ENCODE measurements at regions of chr22 and their contacts with region 1.

Region 1: DNA sequence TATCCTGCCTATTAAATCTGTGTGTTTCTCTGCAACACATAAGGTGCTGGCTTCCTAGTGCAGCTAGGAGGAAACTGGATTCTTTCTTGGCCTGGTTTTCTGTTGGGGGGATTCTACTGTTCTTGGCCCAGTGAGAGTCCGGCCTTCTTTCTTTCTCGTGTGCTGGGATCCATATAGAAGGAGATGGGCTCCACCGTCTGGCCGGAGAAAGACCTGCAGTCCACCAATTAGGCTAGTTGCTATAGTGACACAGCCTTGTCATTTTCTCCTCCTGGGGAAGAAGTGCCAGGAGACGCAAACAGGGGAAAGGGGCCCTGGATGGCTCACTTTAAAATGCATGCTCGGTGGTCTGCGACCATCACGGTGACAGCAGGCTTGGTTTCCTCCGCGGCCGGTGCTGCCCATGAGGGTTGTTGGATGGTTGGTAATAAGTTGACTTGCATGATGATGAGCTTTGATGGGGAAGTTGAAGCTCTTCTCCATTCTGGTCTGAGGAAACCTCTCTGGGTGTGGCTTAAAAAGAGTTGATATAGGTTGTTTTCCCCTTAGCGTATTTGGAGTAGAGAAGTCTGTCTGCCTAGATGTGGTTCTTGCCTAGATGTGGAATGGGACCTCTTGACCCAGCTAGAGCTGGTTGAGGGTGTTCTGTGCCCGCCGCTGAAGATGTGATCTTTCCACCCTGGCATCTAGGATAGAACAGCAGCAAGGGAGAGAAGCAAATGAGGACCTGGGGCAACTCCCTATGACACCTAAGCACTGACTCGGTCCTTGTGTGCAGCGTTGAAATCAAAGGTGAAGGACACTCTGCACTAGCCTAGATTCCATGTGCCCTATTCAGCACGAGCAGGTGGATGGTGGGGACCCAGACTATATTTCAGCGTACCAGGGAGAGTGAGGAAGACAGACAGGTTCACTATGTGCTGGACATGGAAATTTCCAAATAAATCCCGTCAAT is 1335.0 kb downstream of the BRD1 start:
- DNase-seq: peak; percentile 1
- ATAC-seq: peak; percentile 79
- H3K4me3 ChIP-seq: no peak overlapping the region
- H3K27ac ChIP-seq: no peak overlapping the region
- H3K4me1 ChIP-seq: no peaks in the 10 kb centered on the region
- H3K27me3 ChIP-seq: peaks cover 0 to 5% of the 10 kb centered on the region in 2 experiments; a peak in 3 of 4 replicates
- CTCF ChIP-seq: peak; percentile 76 to 80 (median 79)
- EP300 ChIP-seq: no peak
- POLR2A ChIP-seq: no peak
- RAD21 ChIP-seq: peak; percentile 81

Region 2: GRCh38 chr22:47213571-47214230 is 1278.9 kb before region 1 on chr22:
- CTCF ChIA-PET with region 1: interaction called, 8 read pairs
- POLR2A ChIA-PET with region 1: no interaction called
- RAD21 ChIA-PET with region 1: interaction called, 4 read pairs
- SMC1A ChIA-PET with region 1: interaction called, 6 read pairs
- in situ Hi-C with region 1: loop called (anchors 5 kb)
- intact Hi-C with region 1: loop called (anchors 1 kb)
- DNase-seq: no peak
- ATAC-seq: peak; percentile 76
- H3K4me3 ChIP-seq: no peak overlapping the region
- H3K27ac ChIP-seq: no peak overlapping the region
- H3K4me1 ChIP-seq: no peaks in the 10 kb centered on the region
- H3K27me3 ChIP-seq: no peaks in the 10 kb centered on the region
- CTCF ChIP-seq: peak; percentile 83 to 91 (median 90)
- EP300 ChIP-seq: no peak
- POLR2A ChIP-seq: no peak
- RAD21 ChIP-seq: peak; percentile 71

Region 3: GRCh38 chr22:47408409-47408808 is 1084.2 kb before region 1 on chr22:
- CTCF ChIA-PET with region 1: interaction called, 5 read pairs
- POLR2A ChIA-PET with region 1: no interaction called
- RAD21 ChIA-PET with region 1: no interaction called
- SMC1A ChIA-PET with region 1: no interaction called
- in situ Hi-C with region 1: no loop called
- intact Hi-C with region 1: loop called (anchors 10 kb)
- DNase-seq: no peak
- ATAC-seq: no peak
- H3K4me3 ChIP-seq: no peak overlapping the region
- H3K27ac ChIP-seq: no peak overlapping the region
- H3K4me1 ChIP-seq: no peaks in the 10 kb centered on the region
- H3K27me3 ChIP-seq: no peaks in the 10 kb centered on the region
- CTCF ChIP-seq: no peak; a peak in 1 of 6 replicates
- EP300 ChIP-seq: no peak
- POLR2A ChIP-seq: no peak
- RAD21 ChIP-seq: no peak

Region 4: GRCh38 chr22:48536541-48537342 is 44.1 kb after region 1 on chr22:
- CTCF ChIA-PET with region 1: no interaction called
- POLR2A ChIA-PET with region 1: no interaction called
- RAD21 ChIA-PET with region 1: no interaction called
- SMC1A ChIA-PET with region 1: no interaction called
- in situ Hi-C with region 1: no loop called
- intact Hi-C with region 1: no loop called
- DNase-seq: no peak
- ATAC-seq: no peak
- H3K4me3 ChIP-seq: no peak overlapping the region
- H3K27ac ChIP-seq: no peak overlapping the region
- H3K4me1 ChIP-seq: no peaks in the 10 kb centered on the region
- H3K27me3 ChIP-seq: no peaks in the 10 kb centered on the region
- CTCF ChIP-seq: no peak
- EP300 ChIP-seq: no peak
- POLR2A ChIP-seq: no peak
- RAD21 ChIP-seq: no peak

Measured in GM12878 (cell line).